Transverse colon (tissue), 4 donors: ENCODE measurements at regions of chr6 and their contacts with region 1.

Region 1: GRCh38 chr6:56292505-56293181 is 45.3 kb upstream of the COL21A1 start:
- DNase-seq: peak; percentile 9
- H3K4me3 ChIP-seq: no peak overlapping the region
- H3K27ac ChIP-seq: no peak overlapping the region
- H3K4me1 ChIP-seq: no peaks in the 10 kb centered on the region
- H3K27me3 ChIP-seq: no peaks in the 10 kb centered on the region
- CTCF ChIP-seq: peak; percentile 46 to 65 (median 61)
- EP300 ChIP-seq: no peak
- POLR2A ChIP-seq: no peak

Region 2: DNA sequence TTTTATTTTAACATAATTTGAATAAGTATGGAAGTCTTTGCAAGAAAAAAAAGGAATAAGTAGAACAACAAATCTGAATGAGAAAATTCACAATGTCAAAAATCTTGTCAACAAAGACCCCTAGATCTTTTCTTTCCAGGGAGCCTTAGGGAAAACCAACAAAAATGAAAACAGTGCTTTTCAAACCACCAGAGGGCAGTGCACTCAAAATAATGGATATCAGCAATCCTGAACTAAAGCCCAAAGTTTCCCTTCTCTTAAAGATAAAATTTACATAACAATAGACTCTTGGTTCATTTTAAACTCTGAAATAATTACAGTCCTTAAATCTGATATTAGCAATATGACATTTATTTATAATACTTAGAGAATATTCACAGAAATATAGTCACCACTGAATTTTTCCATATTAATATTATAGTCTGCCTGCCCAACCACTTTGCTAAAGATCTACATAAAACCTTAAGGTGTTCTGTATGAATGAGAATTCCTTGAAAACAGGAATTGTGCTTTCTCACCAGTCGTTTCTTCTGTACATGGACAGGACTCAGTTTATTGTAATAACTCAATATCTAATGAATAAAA is 311.9 kb before region 1 on chr6:
- in situ Hi-C with region 1: loop called (anchors 5 to 10 kb)
- intact Hi-C with region 1: loop called (anchors 1 kb)
- DNase-seq: no peak
- H3K4me3 ChIP-seq: no peak overlapping the region
- H3K27ac ChIP-seq: no peak overlapping the region
- H3K4me1 ChIP-seq: no peaks in the 10 kb centered on the region
- H3K27me3 ChIP-seq: no peaks in the 10 kb centered on the region
- CTCF ChIP-seq: peak; percentile 64 to 81 (median 69)
- EP300 ChIP-seq: no peak
- POLR2A ChIP-seq: no peak